Activated T-helper 2 cell treated with anti-CD3 and anti-CD28 coated beads, Interferon-gamma antibody, Interleukin-2, Interleukin-4, amounts not matched to agents 10 μg/mL and 5 μg/mL and 100 μg/mL, durations not matched to agents 14 hours and 24 hours and 36 hours (primary cell): ENCODE measurements at regions of chr16 and their contacts with region 1.

Region 1: DNA sequence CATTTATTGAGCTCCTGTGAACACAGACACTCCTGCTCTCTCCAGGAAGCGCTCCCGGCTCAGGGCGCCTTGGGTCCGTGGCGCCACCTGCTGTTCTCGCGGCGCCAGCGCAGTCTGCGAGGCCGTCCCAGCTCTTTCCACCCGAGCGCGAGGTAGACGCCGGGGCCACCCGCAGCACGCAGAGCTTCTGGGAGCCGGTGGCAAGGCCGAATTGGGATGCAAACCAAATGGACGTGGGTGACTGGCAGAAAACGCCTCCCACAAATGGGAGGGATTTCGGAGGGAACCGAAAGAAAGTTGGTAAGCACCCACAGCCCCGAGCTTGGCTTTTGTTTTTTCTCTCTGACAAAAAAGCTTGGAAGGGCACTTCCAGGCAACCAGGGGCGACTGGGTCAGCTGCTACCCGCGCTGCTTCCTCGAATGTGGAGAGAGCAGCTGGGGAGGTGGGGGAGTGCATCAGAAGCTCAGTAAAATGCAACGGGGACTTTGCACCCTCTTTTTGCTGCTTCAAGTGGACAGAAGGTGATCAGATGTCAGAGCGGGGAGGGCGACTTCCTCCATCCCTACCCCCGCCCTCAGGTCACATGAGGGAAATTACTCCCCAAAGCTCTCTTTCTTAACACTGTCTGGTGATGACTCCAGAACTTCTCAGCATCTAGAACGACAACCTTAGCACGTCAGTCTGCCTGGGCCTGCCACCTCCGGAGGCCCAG is 13.5 kb upstream of the N4BP1 start:
- DNase-seq: peak; percentile 76
- H3K4me3 Mint-ChIP-seq: peak overlapping the region; percentile 79
- H3K27ac Mint-ChIP-seq: peak overlapping the region; percentile 66
- H3K4me1 Mint-ChIP-seq: peaks cover 25% of the 10 kb centered on the region
- H3K27me3 Mint-ChIP-seq: peaks cover 4% of the 10 kb centered on the region

Region 2: GRCh38 chr16:48353565-48354163 is 269.8 kb before region 1 on chr16:
- intact Hi-C with region 1: loop called (anchors 1 kb)
- DNase-seq: peak; percentile 64
- H3K4me3 Mint-ChIP-seq: no peak overlapping the region
- H3K27ac Mint-ChIP-seq: peak overlapping the region; percentile 49
- H3K4me1 Mint-ChIP-seq: peaks cover 20% of the 10 kb centered on the region
- H3K27me3 Mint-ChIP-seq: no peaks in the 10 kb centered on the region

Region 3: DNA sequence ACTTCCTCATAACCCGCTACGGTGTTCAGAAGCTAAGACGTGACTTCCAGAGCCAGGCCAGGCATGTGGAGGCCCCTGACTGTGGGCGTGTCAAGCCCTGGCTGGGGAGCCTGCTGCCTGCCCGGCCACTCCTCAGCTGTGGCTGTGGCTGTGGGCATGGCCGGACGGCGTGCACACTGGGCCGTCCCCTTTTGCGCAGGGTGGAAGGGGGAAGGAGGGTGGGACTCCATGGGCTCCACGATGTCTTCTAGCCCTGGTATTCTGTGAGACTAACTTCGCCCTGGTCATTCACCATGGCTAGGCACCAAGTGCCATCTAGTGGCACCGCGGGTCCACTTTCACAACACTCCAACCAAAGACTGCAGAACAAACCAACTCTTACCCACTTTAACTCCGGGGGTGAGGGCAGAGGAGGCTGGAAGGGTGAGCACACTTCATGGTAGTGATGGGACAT is 81.4 kb before region 1 on chr16:
- intact Hi-C with region 1: no loop called
- DNase-seq: no peak
- H3K4me3 Mint-ChIP-seq: no peak overlapping the region
- H3K27ac Mint-ChIP-seq: no peak overlapping the region
- H3K4me1 Mint-ChIP-seq: peaks cover 12% of the 10 kb centered on the region
- H3K27me3 Mint-ChIP-seq: no peaks in the 10 kb centered on the region

Region 4: DNA sequence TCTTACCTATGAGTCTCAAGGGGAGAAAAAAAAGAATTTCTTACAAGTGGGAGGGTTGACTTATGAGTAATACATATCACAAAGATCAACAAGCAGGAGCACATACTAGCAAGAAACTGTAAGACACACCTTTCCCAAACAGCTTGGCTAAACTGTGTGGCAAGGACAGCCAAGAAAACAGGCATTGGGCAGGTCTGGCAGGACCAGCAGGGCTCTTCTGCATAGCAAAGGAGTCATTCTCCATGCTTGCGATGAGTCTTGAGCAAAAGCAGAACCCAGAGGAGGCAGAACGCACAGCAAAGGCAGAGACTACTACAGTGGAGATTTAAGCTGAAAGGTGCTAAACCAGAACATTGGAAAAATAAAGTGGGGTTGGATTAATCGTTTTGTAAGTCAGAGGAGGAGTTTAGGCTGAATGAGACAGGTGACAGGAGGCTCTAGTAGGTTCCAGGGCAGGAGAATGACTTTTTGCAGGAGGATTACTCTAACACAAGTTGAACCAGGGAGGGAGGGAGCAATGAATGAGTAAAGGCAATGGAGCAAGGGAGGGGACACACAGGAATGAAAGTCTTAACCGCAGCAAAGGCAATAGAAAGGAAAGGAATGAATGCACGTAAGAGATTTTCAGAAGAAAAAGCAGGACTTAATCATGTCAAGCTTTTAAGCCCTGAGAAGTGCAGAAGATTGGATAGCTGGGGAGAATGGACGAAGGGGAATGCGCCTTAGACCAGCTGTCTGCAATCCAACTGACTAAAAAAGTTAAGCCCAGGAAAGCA is 16.2 kb before region 1 on chr16:
- intact Hi-C with region 1: no loop called
- DNase-seq: no peak
- H3K4me3 Mint-ChIP-seq: no peak overlapping the region
- H3K27ac Mint-ChIP-seq: no peak overlapping the region
- H3K4me1 Mint-ChIP-seq: peaks cover 36% of the 10 kb centered on the region
- H3K27me3 Mint-ChIP-seq: no peaks in the 10 kb centered on the region